B cell (primary cell): ENCODE measurements at regions of chr9 and their contacts with region 1.

Region 1: DNA sequence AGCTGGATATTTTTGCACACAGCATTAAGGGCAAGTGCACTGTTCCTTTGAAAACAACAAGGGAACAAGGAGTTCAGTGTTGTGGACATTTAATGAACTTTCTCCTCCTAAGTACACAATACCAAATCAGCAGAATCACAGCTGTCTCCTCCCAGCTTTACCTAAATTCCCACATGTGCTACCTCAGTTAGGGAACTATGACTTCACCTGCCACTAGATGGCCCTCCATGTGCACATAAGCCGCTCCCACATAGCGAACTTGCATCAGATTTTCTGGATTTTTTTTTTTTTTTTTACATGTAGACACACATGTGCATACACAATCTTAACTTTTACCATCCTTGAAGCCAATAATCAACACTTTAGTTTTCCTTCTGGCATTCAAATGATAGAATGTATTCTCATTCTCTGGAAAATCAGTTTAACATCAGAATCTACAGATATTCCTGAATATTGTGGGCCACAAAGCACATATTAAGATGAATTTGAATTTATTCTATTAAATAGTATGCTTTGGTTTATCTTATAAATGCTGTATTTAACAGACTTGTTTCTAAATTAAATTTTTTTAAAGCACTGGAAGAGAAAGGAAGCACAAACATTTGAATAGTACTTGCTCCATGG is 123.6 kb downstream of the PALM2AKAP2 start:
- DNase-seq: peak; percentile 82
- ATAC-seq: peak; percentile 63
- H3K4me3 ChIP-seq: no peak overlapping the region
- H3K4me3 Mint-ChIP-seq: no peak overlapping the region
- H3K27ac ChIP-seq: no peak overlapping the region
- H3K27ac Mint-ChIP-seq: no peak overlapping the region
- H3K4me1 ChIP-seq: peaks cover 34 to 35% of the 10 kb centered on the region in 2 donors
- H3K4me1 Mint-ChIP-seq: peaks cover 11% of the 10 kb centered on the region
- H3K27me3 ChIP-seq: no peaks in the 10 kb centered on the region
- H3K27me3 Mint-ChIP-seq: no peaks in the 10 kb centered on the region
- CTCF ChIP-seq: peak; percentile 94

Region 2: DNA sequence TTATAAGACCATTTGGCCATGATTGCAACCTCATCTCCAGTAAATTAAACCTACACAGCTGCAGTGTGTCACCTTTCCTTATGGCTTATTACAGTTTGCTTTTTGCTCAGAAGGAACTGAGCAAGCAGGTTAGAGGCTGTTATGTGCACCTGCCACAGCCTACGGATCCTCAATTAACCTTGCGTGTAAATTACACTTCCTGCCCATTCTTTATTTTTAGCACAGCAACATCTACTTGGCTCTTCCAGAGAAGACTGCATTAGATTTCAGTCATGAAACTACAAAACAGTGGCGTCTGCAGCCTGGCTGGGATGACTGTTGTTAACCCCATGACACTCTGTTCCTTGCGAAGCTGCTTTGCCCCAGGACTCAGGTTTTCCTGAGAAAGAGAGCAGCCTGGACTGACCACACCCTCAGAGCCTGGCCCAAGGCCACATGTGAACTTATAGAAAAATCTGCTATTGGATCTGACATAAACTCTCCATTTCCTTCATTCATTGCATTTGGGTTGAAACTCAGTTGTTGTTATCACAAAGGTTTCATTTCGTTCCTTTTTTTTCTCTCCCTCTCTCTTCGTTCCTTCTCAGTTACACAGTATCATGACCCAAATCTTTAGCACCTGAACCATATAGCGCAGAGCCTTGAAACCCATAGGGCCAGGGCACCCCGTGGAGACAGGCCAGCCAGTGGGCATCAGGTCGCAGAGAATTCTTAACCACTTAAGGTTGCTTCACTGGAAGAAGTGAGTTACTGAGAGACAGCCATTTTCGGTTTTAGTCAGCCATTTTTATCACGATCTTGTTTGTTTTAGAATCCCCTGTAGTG is 14.9 kb after region 1 on chr9:
- CTCF ChIA-PET with region 1: interaction called, 27 read pairs
- POLR2A ChIA-PET with region 1: no interaction called
- intact Hi-C with region 1: no loop called
- DNase-seq: peak; percentile 75
- ATAC-seq: peak; percentile 71
- H3K4me3 ChIP-seq: peak overlapping the region; percentile 4 to 38 (median 30)
- H3K4me3 Mint-ChIP-seq: peak overlapping the region; percentile 79
- H3K27ac ChIP-seq: peak overlapping the region; percentile 97
- H3K27ac Mint-ChIP-seq: peak overlapping the region; percentile 96
- H3K4me1 ChIP-seq: peaks cover 87 to 90% of the 10 kb centered on the region in 2 donors
- H3K4me1 Mint-ChIP-seq: peaks cover 83% of the 10 kb centered on the region
- H3K27me3 ChIP-seq: no peaks in the 10 kb centered on the region
- H3K27me3 Mint-ChIP-seq: no peaks in the 10 kb centered on the region
- CTCF ChIP-seq: no peak

Region 3: GRCh38 chr9:110058304-110058953 is 154.8 kb after region 1 on chr9:
- CTCF ChIA-PET with region 1: interaction called, 585 read pairs
- POLR2A ChIA-PET with region 1: interaction called, 5 read pairs
- intact Hi-C with region 1: loop called (anchors 1 kb)
- DNase-seq: peak; percentile 75
- ATAC-seq: peak; percentile 65
- H3K4me3 ChIP-seq: no peak overlapping the region
- H3K4me3 Mint-ChIP-seq: peak overlapping the region; percentile 68
- H3K27ac ChIP-seq: peak overlapping the region in 1 of 2 donors; percentile 45
- H3K27ac Mint-ChIP-seq: peak overlapping the region; percentile 80
- H3K4me1 ChIP-seq: peaks cover 57 to 70% of the 10 kb centered on the region in 2 donors
- H3K4me1 Mint-ChIP-seq: peaks cover 76% of the 10 kb centered on the region
- H3K27me3 ChIP-seq: no peaks in the 10 kb centered on the region
- H3K27me3 Mint-ChIP-seq: no peaks in the 10 kb centered on the region
- CTCF ChIP-seq: peak; percentile 77

Region 4: GRCh38 chr9:110110154-110110553 is 206.5 kb after region 1 on chr9:
- CTCF ChIA-PET with region 1: interaction called, 20 read pairs
- POLR2A ChIA-PET with region 1: no interaction called
- intact Hi-C with region 1: no loop called
- DNase-seq: peak; percentile 61
- ATAC-seq: peak; percentile 70
- H3K4me3 ChIP-seq: no peak overlapping the region
- H3K4me3 Mint-ChIP-seq: peak overlapping the region; percentile 52
- H3K27ac ChIP-seq: peak overlapping the region; percentile 38 to 84
- H3K27ac Mint-ChIP-seq: peak overlapping the region; percentile 74
- H3K4me1 ChIP-seq: peaks cover 73 to 82% of the 10 kb centered on the region in 2 donors
- H3K4me1 Mint-ChIP-seq: peaks cover 73% of the 10 kb centered on the region
- H3K27me3 ChIP-seq: no peaks in the 10 kb centered on the region
- H3K27me3 Mint-ChIP-seq: no peaks in the 10 kb centered on the region
- CTCF ChIP-seq: no peak

Region 5: GRCh38 chr9:110152704-110153374 is 249.2 kb after region 1 on chr9:
- CTCF ChIA-PET with region 1: interaction called, 250 read pairs
- POLR2A ChIA-PET with region 1: interaction called, 6 read pairs
- intact Hi-C with region 1: loop called (anchors 1 kb)
- DNase-seq: peak; percentile 76
- ATAC-seq: peak; percentile 32
- H3K4me3 ChIP-seq: peak overlapping the region in 1 of 5 experiments; percentile 2
- H3K4me3 Mint-ChIP-seq: peak overlapping the region; percentile 51
- H3K27ac ChIP-seq: peak overlapping the region; percentile 54 to 90
- H3K27ac Mint-ChIP-seq: peak overlapping the region; percentile 84
- H3K4me1 ChIP-seq: peaks cover 92% of the 10 kb centered on the region in 2 donors
- H3K4me1 Mint-ChIP-seq: peaks cover 97% of the 10 kb centered on the region
- H3K27me3 ChIP-seq: no peaks in the 10 kb centered on the region
- H3K27me3 Mint-ChIP-seq: no peaks in the 10 kb centered on the region
- CTCF ChIP-seq: peak; percentile 80